Heart right ventricle (tissue), 16 donors: ENCODE measurements at regions of chr1 and their contacts with region 1.

Region 1: GRCh38 chr1:21963477-21964217 is 13.2 kb upstream of the CELA3B start:
- DNase-seq: peak; percentile 73 to 79
- ATAC-seq: peak; percentile 86 to 94 (median 90)
- H3K4me3 ChIP-seq: no peak overlapping the region
- H3K27ac ChIP-seq: no peak overlapping the region
- H3K4me1 ChIP-seq: peaks cover 0 to 30% (median 9%) of the 10 kb centered on the region in 9 donors
- H3K27me3 ChIP-seq: no peaks in the 10 kb centered on the region
- CTCF ChIP-seq: peak; percentile 76 to 97 (median 95)

Region 2: GRCh38 chr1:21716169-21716568 is 247.5 kb before region 1 on chr1:
- intact Hi-C with region 1: loop called in 1 of 10 experiments (anchors 10 kb)
- DNase-seq: no peak
- ATAC-seq: no peak
- H3K4me3 ChIP-seq: no peak overlapping the region
- H3K27ac ChIP-seq: no peak overlapping the region
- H3K4me1 ChIP-seq: no peaks in the 10 kb centered on the region
- H3K27me3 ChIP-seq: no peaks in the 10 kb centered on the region
- CTCF ChIP-seq: no peak

Region 3: GRCh38 chr1:21782868-21783678 is 180.6 kb before region 1 on chr1 and contains the start of gene USP48:
- intact Hi-C with region 1: loop called in 2 of 10 experiments (anchors 10 kb)
- DNase-seq: peak; percentile 98 to 99
- ATAC-seq: peak; percentile 97 to 99 (median 97)
- H3K4me3 ChIP-seq: peak within 1 kb of the TSS; percentile 80 to 98 (median 94)
- H3K27ac ChIP-seq: peak within 1 kb of the TSS; percentile 92 to 100 (median 99)
- H3K4me1 ChIP-seq: peaks cover 4 to 35% (median 22%) of the 10 kb centered on the region in 9 donors
- H3K27me3 ChIP-seq: no peaks in the 10 kb centered on the region
- CTCF ChIP-seq: no peak
- total RNA-seq, gene USP48: 33.0 to 45.0 (median 37.0) TPM

Region 4: DNA sequence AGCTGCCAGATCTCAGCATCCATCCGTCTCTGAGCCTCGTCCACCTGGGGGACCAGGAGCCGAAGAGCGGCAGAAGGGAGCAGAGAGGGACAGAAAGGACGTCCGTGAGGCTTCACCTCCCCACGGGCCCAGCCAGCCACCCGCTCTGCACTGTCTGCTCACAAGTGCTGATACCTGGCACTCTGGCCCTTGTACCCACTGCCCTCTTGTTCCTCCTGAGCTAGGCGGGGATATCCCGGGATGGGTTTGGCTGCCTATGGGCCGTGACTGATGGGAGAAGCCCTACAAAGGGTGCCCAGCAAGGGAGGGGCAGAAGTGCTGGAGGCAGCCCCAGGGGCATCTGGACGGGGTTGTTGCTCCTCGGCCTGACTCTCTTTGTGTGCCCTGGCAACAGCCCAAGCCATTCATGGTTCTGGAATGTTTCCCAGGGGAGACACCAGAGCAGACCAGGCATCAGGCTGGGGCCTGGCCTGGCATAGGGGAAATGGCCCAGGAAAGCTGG is 94.0 kb before region 1 on chr1:
- intact Hi-C with region 1: loop called in 6 of 10 experiments (anchors 5 to 10 kb)
- DNase-seq: peak; percentile 70 to 82
- ATAC-seq: peak; percentile 57 to 88 (median 80)
- H3K4me3 ChIP-seq: no peak overlapping the region
- H3K27ac ChIP-seq: peak overlapping the region in 8 of 10 donors; percentile 7 to 69 (median 55)
- H3K4me1 ChIP-seq: peaks cover 6 to 44% (median 14%) of the 10 kb centered on the region in 9 donors
- H3K27me3 ChIP-seq: no peaks in the 10 kb centered on the region
- CTCF ChIP-seq: no peak

Region 5: GRCh38 chr1:21896652-21897532 is 66.8 kb before region 1 on chr1:
- intact Hi-C with region 1: loop called in 6 of 10 experiments (anchors 2 to 5 kb)
- DNase-seq: peak; percentile 81 to 86
- ATAC-seq: peak; percentile 63 to 86 (median 76)
- H3K4me3 ChIP-seq: no peak overlapping the region
- H3K27ac ChIP-seq: peak overlapping the region; percentile 75 to 99 (median 91)
- H3K4me1 ChIP-seq: peaks cover 55 to 98% (median 90%) of the 10 kb centered on the region in 9 donors
- H3K27me3 ChIP-seq: no peaks in the 10 kb centered on the region
- CTCF ChIP-seq: no peak

Region 6: DNA sequence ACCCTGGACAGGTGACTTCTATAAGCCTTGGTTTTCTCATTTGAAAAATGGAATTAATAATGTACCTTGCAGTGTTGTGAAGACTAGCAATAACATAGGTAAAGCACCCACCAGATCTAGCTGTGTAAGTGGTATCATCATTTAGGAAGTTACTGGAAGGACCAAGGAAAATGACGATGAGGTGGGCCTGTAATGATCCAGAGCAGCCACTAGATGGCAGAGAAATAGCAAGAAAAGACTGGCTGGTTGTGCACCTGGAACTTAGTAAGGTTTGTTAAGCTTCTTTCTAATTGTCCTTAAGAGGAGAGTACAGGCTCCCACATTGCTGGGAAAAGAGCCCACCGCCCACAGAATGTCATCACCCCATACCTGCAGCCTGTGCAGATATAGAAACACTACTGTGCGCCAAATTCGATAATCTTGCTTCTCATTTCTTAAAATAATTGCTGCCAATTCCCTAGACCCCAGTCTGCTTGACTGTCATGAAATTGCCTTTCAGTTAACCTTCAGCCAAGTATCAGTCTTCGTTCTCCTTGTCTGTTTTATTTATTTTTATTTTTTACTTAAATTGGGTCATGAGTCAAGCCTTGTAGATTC is 142.1 kb after region 1 on chr1:
- intact Hi-C with region 1: no loop called
- DNase-seq: no peak
- ATAC-seq: peak in 5 of 8 donors; percentile 24 to 41 (median 33)
- H3K4me3 ChIP-seq: no peak overlapping the region
- H3K27ac ChIP-seq: no peak overlapping the region
- H3K4me1 ChIP-seq: peaks cover 0 to 49% (median 20%) of the 10 kb centered on the region in 9 donors
- H3K27me3 ChIP-seq: no peaks in the 10 kb centered on the region
- CTCF ChIP-seq: peak; percentile 64 to 86 (median 75)